ENCODE measurements at regions of chr14 and their contacts with region 1.

Region 1: GRCh38 chr14:24431569-24432258 is 2.0 kb downstream of the KHNYN start:
- DNase-seq: peak; percentile 87 to 90
- H3K4me3 ChIP-seq: peak overlapping the region in 1 of 3 donors; percentile 86
- H3K27ac ChIP-seq: peak overlapping the region; percentile 81 to 95 (median 91)
- H3K4me1 ChIP-seq: peaks cover 23 to 48% of the 10 kb centered on the region in 2 donors
- H3K27me3 ChIP-seq: no peaks in the 10 kb centered on the region
- CTCF ChIP-seq: peak; percentile 85 to 97 (median 90)
- POLR2A ChIP-seq: peak in 1 of 2 donors; percentile 7

Region 2: DNA sequence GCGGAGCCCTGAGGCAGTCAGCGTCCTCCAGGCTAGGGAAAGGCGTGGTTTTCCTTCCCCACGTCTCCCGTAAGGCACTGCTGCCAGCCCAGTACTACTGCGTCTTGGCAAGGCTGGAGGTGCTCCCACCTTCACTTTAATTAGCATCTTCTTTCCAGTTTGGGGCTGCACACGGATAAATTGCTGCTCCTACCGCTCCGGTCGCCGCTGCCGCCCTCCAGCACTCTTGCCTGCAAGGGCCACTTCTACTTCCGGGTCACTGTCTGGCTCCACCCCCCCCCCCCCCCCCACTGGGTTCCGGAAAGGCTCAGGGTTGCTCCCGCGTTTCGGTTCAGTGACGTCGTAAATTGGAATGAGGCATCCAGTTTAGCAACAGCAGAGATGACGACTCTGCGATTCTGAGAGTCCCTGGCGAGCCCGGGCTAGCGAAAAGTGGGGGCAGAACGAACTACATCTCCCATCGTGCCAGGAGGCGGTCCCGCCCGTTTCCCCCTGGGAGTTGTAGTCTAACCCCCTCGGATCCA is 199.5 kb before region 1 on chr14 and contains the start of gene NEDD8:
- intact Hi-C with region 1: loop called (anchors 10 kb)
- DNase-seq: peak; percentile 89 to 91
- H3K4me3 ChIP-seq: peak within 1 kb of the TSS; percentile 56 to 92 (median 78)
- H3K27ac ChIP-seq: peak within 1 kb of the TSS; percentile 64 to 91 (median 85)
- H3K4me1 ChIP-seq: peaks cover 18 to 28% of the 10 kb centered on the region in 2 donors
- H3K27me3 ChIP-seq: no peaks in the 10 kb centered on the region
- CTCF ChIP-seq: peak in 1 of 6 experiments; percentile 5
- POLR2A ChIP-seq: peak in 1 of 2 donors; percentile 51
- total RNA-seq, gene NEDD8: 149 to 317 (median 172) TPM

Region 3: GRCh38 chr14:24332268-24332993 is 99.3 kb before region 1 on chr14:
- intact Hi-C with region 1: loop called (anchors 2 kb)
- DNase-seq: peak; percentile 82 to 83
- H3K4me3 ChIP-seq: peak overlapping the region in 1 of 3 donors; percentile 19
- H3K27ac ChIP-seq: peak overlapping the region in 1 of 3 donors; percentile 44
- H3K4me1 ChIP-seq: peaks cover 21 to 55% of the 10 kb centered on the region in 2 donors
- H3K27me3 ChIP-seq: no peaks in the 10 kb centered on the region
- CTCF ChIP-seq: peak; percentile 53 to 87 (median 73)
- POLR2A ChIP-seq: no peak

Region 4: DNA sequence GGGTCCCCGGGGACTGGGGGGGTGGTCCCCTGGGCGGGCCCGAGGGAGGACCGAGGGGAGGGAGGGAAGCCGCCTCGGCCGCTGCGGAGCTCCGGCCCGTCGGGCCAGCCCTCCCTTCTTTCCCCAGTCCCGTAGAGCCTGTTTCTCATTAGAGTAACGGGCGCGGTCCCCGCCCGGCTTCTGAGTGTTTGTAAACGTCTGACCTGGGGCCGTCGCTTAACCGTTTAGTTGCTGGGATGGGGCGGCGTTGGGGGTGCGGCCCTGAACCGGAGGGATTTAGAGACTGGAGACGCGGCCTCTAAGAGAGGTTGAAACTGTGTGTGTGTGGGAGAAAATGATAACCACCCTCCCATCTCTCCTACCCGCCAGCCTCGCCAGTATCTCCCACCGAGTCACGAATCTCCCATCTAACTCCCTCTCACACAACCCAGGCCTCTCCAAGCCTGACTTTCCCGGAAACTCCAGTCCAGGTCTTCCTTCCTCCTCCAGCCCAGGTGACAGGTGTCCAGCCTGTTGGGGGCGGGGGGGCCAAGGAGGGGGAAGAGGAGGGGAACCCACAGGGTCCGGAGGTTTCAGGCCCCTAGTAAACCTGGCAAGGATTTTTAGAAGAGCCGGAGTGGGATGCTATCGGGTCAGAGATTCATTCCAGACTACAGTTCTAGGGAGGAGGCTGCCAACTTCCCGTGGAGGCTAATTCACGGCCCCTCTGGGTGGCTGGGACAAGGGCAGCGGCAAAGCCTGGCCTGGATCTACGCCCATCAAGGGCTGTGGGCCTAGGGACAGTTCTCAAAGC is 64.8 kb before region 1 on chr14:
- intact Hi-C with region 1: loop called (anchors 2 kb)
- DNase-seq: peak; percentile 96 to 97
- H3K4me3 ChIP-seq: peak overlapping the region; percentile 24 to 80 (median 32)
- H3K27ac ChIP-seq: peak overlapping the region; percentile 94 to 96 (median 95)
- H3K4me1 ChIP-seq: peaks cover 17 to 19% of the 10 kb centered on the region in 2 donors
- H3K27me3 ChIP-seq: no peaks in the 10 kb centered on the region
- CTCF ChIP-seq: peak in 1 of 6 experiments; percentile 14
- POLR2A ChIP-seq: peak in 1 of 2 donors; percentile 44

Region 5: DNA sequence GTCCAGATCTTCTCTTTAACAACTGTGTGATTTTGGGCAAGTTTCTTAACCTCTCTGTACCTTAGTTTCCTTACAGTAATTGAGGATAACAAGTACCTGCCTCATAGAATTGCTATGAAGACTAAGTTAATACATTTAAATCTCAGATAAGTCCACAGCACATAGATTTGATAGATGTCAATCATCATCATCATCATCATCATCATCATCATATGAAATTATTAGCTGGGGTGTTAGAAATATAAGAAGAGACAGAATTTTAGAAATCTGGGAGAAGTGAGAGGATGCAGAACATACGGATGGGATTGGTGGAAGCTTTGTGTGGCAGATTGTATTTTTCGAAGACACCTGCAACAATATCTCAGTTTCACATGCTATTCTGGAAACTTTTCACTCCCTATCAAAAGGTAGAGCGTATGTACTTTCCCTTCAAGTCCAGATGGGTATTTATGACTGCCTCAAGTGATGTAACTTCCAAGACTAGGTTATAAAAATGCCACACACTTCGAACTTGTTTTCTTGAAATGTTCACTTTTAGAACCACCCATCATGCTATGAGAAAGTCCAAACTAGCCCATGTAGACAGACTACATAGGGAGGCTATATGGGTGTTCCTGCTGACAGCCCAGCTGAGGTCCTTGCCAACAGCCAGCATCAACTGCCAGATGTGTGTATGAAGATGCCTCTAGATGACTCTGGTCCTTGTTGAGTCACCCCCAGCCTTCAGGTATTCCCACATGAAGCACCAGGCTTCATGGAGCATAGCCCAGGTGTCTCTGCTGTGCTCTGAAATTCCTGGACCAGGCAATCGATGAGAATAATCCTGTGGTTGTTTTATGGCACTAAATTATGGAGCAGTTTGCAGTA is 31.5 kb after region 1 on chr14:
- intact Hi-C with region 1: no loop called
- DNase-seq: no peak
- H3K4me3 ChIP-seq: no peak overlapping the region
- H3K27ac ChIP-seq: no peak overlapping the region
- H3K4me1 ChIP-seq: peaks cover 7 to 15% of the 10 kb centered on the region in 2 donors
- H3K27me3 ChIP-seq: no peaks in the 10 kb centered on the region
- CTCF ChIP-seq: no peak
- POLR2A ChIP-seq: no peak